CD4-positive, alpha-beta memory T cell (primary cell): ENCODE measurements at regions of chr5 and their contacts with region 1.

Region 1: DNA sequence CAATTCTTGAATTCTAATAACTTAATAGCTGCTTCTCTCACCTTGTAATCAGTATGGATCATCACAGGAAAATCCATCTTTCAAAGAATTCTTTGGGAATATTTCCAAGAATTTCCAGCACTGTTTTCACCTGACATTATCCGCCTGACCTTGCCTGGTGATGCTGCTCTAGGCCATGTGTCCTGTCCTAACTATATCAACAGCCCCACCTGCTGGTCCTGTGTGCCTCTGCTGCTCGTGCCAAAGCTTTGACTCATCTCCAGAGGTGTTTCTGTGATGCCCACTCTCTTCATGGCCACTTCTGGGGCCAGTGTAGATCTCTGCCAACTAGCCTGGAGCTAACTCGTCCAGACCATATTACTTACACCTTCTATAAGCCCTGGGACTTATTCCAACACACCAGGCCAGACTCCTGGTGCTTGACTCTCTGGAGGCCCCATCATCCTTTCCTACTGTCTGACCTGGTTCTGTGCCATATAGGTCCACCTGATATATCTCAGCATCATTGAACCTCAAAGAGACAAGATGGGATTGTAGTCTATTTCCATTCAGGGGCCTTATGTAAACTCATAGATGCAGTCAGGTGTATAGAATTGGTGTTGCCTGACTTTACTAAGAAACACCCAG is 67.5 kb upstream of the CKMT2 start:
- DNase-seq: peak; percentile 23 to 49 (median 40)
- H3K4me3 ChIP-seq: no peak overlapping the region
- H3K4me3 Mint-ChIP-seq: no peak overlapping the region
- H3K27ac ChIP-seq: no peak overlapping the region
- H3K27ac Mint-ChIP-seq: no peak overlapping the region
- H3K4me1 ChIP-seq: no peaks in the 10 kb centered on the region
- H3K4me1 Mint-ChIP-seq: peaks cover 0 to 13% (median 5%) of the 10 kb centered on the region in 4 donors
- H3K27me3 ChIP-seq: no peaks in the 10 kb centered on the region
- H3K27me3 Mint-ChIP-seq: no peaks in the 10 kb centered on the region

Region 2: DNA sequence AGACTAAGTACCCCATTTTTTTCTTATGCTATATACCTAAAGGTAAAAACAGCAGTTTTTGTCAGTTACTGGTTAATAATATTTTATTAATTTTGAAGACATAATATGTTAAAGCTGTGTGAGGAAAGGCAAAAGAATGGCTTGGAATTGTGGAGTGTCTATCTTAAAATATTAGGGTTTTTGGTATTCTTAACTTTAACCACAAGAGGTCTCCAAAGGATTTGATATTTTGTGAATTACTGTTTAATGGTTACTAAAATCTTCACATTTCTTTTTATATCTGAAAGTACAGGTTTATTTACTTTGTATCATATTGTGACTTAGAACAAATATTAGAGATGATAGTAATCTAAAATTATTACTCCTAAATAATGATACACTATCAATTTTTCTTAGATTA is 478.8 kb before region 1 on chr5:
- CTCF ChIA-PET with region 1: interaction called, 15 read pairs
- POLR2A ChIA-PET with region 1: no interaction called
- intact Hi-C with region 1: loop called (anchors 1 kb)
- DNase-seq: peak in 4 of 5 donors; percentile 32 to 41 (median 37)
- H3K4me3 ChIP-seq: no peak overlapping the region
- H3K4me3 Mint-ChIP-seq: no peak overlapping the region
- H3K27ac ChIP-seq: no peak overlapping the region
- H3K27ac Mint-ChIP-seq: no peak overlapping the region
- H3K4me1 ChIP-seq: peaks cover 5% of the 10 kb centered on the region
- H3K4me1 Mint-ChIP-seq: peaks cover 13 to 28% (median 19%) of the 10 kb centered on the region in 4 donors
- H3K27me3 ChIP-seq: no peaks in the 10 kb centered on the region
- H3K27me3 Mint-ChIP-seq: no peaks in the 10 kb centered on the region

Region 3: GRCh38 chr5:81058121-81058520 is 107.5 kb before region 1 on chr5:
- CTCF ChIA-PET with region 1: no interaction called
- POLR2A ChIA-PET with region 1: no interaction called
- intact Hi-C with region 1: no loop called
- DNase-seq: no peak
- H3K4me3 ChIP-seq: no peak overlapping the region
- H3K4me3 Mint-ChIP-seq: no peak overlapping the region
- H3K27ac ChIP-seq: no peak overlapping the region
- H3K27ac Mint-ChIP-seq: no peak overlapping the region
- H3K4me1 ChIP-seq: peaks cover 11% of the 10 kb centered on the region
- H3K4me1 Mint-ChIP-seq: peaks cover 14 to 51% (median 26%) of the 10 kb centered on the region in 4 donors
- H3K27me3 ChIP-seq: no peaks in the 10 kb centered on the region
- H3K27me3 Mint-ChIP-seq: no peaks in the 10 kb centered on the region